ENCODE measurements at regions of chr2 and their contacts with region 1.

Region 1: DNA sequence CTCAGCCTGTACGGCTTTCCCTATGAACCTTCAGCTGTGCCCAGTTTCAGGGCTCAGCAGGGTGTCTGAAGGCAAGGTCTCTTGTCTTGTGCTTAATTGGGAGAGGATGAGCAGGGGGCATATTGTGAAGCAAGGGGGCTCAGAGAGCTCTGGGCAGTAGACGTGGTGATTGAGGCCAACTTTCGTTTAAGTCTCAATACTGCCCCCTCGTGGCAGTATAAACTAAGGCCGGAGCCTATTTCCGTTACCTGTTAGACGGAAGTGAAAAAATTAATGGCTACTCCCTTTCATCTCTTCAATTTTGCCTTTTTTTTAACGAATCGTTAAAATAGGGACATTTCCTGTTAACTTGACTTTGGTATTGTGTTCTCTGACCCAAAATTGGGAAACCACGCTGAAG is 193.4 kb downstream of the TDRD15 start:
- DNase-seq: no peak
- ATAC-seq: peak; percentile 72

Region 2: GRCh38 chr2:21043744-21044532 is 273.2 kb before region 1 on chr2 and contains the start of gene APOB:
- intact Hi-C with region 1: loop called (anchors 5 kb)
- DNase-seq: no peak
- ATAC-seq: peak; percentile 44
- total RNA-seq, gene APOB: 12.5 TPM

Region 3: DNA sequence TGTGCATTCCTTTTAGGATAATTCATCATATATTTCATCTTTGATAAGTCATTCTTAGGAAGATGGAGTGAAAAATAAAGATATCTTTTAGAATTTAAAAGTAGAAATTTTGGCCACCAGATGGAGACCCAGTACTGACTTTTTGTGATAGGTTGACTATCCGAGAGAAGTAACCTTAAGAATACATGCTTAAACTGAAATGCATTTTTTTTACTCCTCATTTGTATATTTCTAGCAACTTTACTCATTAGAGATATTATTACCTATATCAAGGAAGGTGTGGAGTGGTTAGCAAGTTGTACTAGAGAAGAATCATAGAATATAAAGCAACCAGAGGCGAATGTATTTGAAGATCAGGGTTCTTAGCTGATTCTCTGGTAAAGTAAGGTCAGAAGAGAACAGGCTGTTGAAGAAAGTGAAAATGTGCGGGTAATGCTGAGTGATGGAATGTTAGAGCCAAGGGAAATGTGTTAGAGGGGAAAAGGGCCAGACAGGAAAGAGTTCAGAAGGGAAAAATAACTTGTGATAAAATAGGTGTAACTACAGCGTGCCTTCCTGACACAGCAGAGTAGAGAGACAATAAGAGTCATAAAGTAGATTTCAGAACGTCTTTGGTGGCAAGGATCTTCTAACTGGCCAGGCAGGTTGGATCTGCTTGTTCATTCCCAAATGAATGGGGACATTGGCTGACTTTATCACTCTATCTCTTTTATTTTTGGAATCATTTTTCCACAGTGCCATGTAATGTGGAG is 141.1 kb before region 1 on chr2:
- intact Hi-C with region 1: loop called (anchors 1 kb)
- DNase-seq: no peak
- ATAC-seq: peak; percentile 63